ENCODE measurements at regions of chr1 and their contacts with region 1.

Region 1: GRCh38 chr1:66242646-66243547 is 291.1 kb upstream of the SGIP1 start:
- DNase-seq: peak; percentile 64
- H3K4me3 Mint-ChIP-seq: no peak overlapping the region
- H3K27ac Mint-ChIP-seq: no peak overlapping the region
- H3K4me1 Mint-ChIP-seq: peaks cover 28% of the 10 kb centered on the region
- H3K27me3 Mint-ChIP-seq: peaks cover 6% of the 10 kb centered on the region

Region 2: DNA sequence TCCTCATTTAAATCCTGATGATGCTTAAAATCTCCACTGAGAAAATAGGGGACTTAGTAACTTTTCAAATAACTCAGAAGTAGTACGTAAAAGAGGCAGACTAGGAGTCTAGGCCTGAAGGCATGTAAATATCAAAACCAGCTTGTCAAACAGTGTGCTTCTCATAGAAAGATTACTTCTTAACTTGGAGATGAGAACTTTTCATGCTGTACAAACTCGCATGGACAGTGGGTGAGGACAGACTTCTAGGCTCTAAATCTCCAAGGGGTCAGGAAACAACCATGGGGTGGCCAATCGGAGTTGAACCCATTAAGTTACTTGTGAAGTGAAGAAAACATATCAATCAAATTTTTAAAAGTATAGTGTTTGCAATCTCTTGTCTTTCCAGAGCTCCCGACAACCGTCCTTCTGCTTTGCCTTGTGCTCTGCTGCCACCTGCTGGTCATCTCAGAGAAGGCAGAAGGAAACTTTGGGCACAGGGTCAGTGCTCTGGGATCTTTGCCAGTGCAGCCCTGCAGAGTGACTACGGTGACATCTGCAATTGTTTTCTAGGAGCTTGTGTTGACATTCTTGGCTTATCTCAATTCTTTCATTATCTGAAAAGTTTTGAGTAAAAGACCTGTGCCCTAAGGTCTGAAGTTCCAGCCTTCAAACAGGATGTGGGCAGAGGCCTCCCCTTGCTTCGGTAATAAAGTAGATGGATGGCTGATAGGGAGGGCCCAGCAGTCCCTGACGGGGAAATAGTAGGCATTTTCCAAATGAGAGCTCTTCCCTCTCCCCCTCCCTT is 555.3 kb before region 1 on chr1:
- intact Hi-C with region 1: loop called (anchors 10 kb)
- DNase-seq: peak; percentile 62
- H3K4me3 Mint-ChIP-seq: no peak overlapping the region
- H3K27ac Mint-ChIP-seq: no peak overlapping the region
- H3K4me1 Mint-ChIP-seq: peaks cover 14% of the 10 kb centered on the region
- H3K27me3 Mint-ChIP-seq: peaks cover 22% of the 10 kb centered on the region

Region 3: DNA sequence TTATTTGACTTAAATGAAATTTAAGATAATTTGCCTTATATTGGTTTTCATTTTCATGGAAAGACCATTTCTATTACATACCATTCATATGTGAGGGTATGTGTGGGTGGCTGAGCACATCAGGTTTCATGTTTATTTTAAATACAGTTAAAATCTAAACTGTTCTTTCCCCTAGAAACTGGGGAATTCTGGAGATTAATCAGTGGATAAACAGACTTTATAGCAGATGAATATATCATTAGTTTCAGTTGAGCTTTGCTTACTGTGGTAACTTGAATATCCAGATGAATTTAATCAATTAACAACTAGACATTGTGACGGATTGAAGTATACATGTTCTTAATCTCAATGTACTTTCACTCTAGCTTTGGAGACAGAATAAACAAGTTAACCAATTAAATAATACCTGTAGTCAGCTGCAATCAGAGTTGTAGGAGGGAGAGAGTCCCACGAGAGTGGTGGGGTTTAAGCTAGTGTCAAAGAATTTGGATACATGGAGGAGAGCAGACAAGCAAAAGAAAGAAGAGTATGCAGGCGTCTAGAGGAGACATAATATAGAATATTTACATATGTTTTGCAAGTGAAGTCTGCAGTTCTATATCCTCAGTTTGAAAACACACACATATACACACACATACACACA is 352.6 kb before region 1 on chr1:
- intact Hi-C with region 1: no loop called
- DNase-seq: no peak
- H3K4me3 Mint-ChIP-seq: no peak overlapping the region
- H3K27ac Mint-ChIP-seq: no peak overlapping the region
- H3K4me1 Mint-ChIP-seq: peaks cover 6% of the 10 kb centered on the region
- H3K27me3 Mint-ChIP-seq: peaks cover 30% of the 10 kb centered on the region

Region 4: GRCh38 chr1:65958561-65959350 is 284.1 kb before region 1 on chr1:
- intact Hi-C with region 1: loop called (anchors 1 kb)
- DNase-seq: peak; percentile 10
- H3K4me3 Mint-ChIP-seq: no peak overlapping the region
- H3K27ac Mint-ChIP-seq: no peak overlapping the region
- H3K4me1 Mint-ChIP-seq: peaks cover 14% of the 10 kb centered on the region
- H3K27me3 Mint-ChIP-seq: peaks cover 2% of the 10 kb centered on the region

Region 5: DNA sequence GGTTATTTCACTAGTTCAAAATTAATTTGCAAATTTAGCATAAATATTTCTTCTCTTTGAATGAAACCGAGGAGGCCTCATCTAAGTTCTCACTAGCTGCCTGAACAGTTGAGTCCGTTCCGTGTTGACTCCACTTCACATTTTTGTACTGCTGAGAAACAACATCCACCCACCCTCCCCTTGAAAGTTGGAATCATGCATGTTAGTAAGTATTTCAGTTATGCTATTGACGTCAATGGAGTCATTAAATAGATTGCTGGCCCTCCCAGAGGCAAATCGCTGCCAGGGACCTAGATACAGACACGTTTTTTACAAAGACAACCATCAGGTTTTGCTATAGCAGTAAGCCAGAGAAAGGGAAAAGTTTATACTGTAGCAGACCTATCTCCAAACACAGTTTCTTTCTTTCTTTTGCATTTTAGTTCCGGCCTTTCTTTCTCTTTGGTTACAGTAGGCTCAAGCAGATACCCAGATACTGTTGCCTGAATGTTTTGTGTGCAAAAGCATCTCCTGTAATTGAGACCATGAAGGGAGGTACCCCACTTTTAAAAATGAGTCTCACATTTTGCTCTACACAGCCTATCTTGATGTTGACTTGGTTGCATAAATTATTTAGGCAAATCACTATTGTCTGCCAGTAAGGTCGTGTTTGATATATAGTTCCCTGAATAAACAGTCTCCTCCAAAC is 28.5 kb after region 1 on chr1:
- intact Hi-C with region 1: loop called (anchors 1 kb)
- DNase-seq: no peak
- H3K4me3 Mint-ChIP-seq: peak overlapping the region; percentile 38
- H3K27ac Mint-ChIP-seq: peak overlapping the region; percentile 85
- H3K4me1 Mint-ChIP-seq: peaks cover 67% of the 10 kb centered on the region
- H3K27me3 Mint-ChIP-seq: peaks cover 2% of the 10 kb centered on the region

Region 6: DNA sequence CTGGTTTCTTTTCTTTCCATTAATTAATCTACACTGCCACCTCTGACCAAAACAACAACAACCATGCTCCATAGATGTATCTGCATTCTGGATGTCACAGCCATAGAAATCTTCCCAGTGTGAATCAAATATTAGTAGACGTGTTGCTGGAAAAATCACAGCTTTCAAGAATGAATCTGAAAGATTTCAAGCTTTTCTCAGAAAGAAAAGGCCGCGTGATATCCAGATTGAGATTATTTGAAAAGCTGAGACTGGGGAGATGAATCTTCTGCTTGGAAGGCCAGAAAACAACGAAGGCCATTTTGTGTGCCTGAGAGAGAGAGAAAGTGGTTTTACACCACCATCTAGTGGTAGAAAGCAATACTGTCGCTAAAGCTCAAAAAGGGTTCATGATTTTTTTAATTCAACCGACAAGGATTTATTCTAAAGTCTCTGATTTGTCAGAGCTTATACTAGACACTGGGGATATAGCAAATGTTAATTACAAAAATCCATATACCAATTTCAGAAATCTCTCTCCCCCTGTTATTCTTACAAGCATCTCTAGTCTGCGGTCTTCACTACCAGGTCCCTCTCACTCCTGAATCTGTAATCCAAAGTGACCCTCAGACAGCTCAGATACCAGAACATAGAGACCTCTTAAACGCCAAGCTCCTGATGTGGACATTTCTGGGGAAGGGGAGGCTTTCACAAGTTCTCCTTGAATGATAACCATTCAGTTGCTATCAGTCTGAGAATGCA is 203.5 kb after region 1 on chr1:
- intact Hi-C with region 1: loop called (anchors 1 kb)
- DNase-seq: peak; percentile 39
- H3K4me3 Mint-ChIP-seq: peak overlapping the region; percentile 56
- H3K27ac Mint-ChIP-seq: peak overlapping the region; percentile 95
- H3K4me1 Mint-ChIP-seq: peaks cover 32% of the 10 kb centered on the region
- H3K27me3 Mint-ChIP-seq: peaks cover 3% of the 10 kb centered on the region

Region 7: DNA sequence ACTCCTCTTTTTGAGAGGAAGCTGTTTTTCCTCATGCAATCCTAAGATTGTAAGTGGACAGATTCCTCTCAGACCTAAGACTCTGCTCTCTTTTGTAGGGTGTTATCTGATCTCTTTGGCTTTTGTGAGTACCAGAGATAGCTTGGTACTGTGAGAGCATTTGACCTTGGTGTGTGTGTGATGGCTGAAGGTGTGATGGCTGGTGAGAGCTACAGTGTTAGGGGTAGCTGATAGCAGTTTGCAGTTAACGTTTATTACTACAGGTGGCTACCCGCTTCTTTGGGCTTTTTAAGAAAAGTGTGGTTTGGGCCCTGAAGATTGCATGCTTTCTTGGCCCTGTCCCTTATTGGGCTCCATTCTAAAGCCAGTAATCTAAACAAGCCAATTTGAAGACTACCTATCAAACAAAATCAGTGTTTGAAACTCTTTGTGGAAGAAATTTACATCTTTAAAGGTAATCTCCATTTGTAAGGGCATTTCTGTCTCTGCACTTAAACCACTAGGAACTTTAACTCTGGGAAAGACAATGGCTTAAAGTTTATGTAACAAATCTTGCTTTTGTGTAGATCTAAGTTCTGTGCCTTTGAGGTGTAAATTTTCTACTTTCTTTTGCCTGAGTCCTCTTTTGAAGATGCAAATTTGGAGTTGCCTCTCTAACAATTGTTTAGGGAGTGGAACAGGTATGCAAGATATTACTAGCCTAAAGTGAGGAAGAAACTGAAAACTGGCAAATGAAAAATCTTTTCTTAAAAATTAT is 1272.6 kb after region 1 on chr1:
- intact Hi-C with region 1: loop called (anchors 5 kb)
- DNase-seq: no peak
- H3K4me3 Mint-ChIP-seq: no peak overlapping the region
- H3K27ac Mint-ChIP-seq: no peak overlapping the region
- H3K4me1 Mint-ChIP-seq: no peaks in the 10 kb centered on the region
- H3K27me3 Mint-ChIP-seq: peaks cover 6% of the 10 kb centered on the region